ENCODE measurements at regions of chr4 and their contacts with region 1.

Region 1: GRCh38 chr4:122732329-122733026 is at the start of gene BBS12:
- DNase-seq: peak; percentile 96 to 99
- ATAC-seq: peak; percentile 96 to 100 (median 98)
- H3K4me3 ChIP-seq: peak within 1 kb of the TSS; percentile 61
- H3K4me3 Mint-ChIP-seq: peak within 1 kb of the TSS; percentile 97
- H3K27ac ChIP-seq: peak within 1 kb of the TSS; percentile 90
- H3K27ac Mint-ChIP-seq: peak within 1 kb of the TSS; percentile 95 to 97
- H3K4me1 ChIP-seq: peaks cover 12% of the 10 kb centered on the region
- H3K4me1 Mint-ChIP-seq: peaks cover 6 to 14% of the 10 kb centered on the region in 2 donors
- H3K27me3 ChIP-seq: no peaks in the 10 kb centered on the region
- H3K27me3 Mint-ChIP-seq: peaks cover 0 to 10% of the 10 kb centered on the region in 2 donors
- CTCF ChIP-seq: peak; percentile 23
- total RNA-seq, gene BBS12: 0.85 to 1.9 (median 1.8) TPM

Region 2: GRCh38 chr4:122577808-122578781 is 154.4 kb before region 1 on chr4:
- intact Hi-C with region 1: no loop called
- DNase-seq: peak in 1 of 2 donors; percentile 89
- ATAC-seq: peak; percentile 61 to 80 (median 64)
- H3K4me3 ChIP-seq: no peak overlapping the region
- H3K4me3 Mint-ChIP-seq: no peak overlapping the region
- H3K27ac ChIP-seq: no peak overlapping the region
- H3K27ac Mint-ChIP-seq: no peak overlapping the region
- H3K4me1 ChIP-seq: peaks cover 7% of the 10 kb centered on the region
- H3K4me1 Mint-ChIP-seq: peaks cover 4% of the 10 kb centered on the region in 2 donors
- H3K27me3 ChIP-seq: no peaks in the 10 kb centered on the region
- H3K27me3 Mint-ChIP-seq: peaks cover 0 to 17% of the 10 kb centered on the region in 2 donors
- CTCF ChIP-seq: peak; percentile 68

Region 3: DNA sequence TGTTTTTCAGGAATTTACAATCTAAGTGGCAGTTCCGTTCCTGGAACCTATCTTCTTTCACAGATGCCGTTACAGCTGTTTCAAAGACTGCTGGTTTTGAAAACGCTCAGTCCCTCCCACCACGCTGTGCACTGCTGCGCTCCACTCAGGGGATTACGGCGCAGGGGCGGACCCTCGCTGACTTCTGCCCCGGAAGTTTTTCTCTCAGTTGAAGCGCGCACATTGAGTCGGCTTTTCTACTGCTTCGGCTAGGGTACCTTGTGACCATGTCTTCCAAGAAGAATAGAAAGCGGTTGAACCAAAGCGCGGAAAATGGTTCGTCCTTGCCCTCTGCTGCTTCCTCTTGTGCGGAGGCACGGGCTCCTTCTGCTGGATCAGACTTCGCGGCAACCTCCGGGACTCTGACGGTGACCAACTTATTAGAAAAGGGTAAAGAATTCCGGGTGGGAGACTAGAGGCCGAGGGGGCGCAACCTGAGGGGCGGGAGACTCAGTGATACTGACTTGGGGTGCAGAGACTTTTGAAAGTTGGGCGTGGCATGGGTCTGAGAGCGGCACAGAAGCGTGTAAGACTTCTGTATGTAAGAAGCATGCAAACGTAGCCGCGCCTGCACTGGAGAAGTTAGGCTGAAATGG is 190.5 kb after region 1 on chr4:
- intact Hi-C with region 1: loop called (anchors 1 kb)
- DNase-seq: peak; percentile 68 to 93
- ATAC-seq: peak; percentile 97 to 98 (median 97)
- H3K4me3 ChIP-seq: peak overlapping the region; percentile 84
- H3K4me3 Mint-ChIP-seq: peak overlapping the region; percentile 97
- H3K27ac ChIP-seq: peak overlapping the region; percentile 65
- H3K27ac Mint-ChIP-seq: peak overlapping the region; percentile 89 to 92
- H3K4me1 ChIP-seq: peaks cover 4% of the 10 kb centered on the region
- H3K4me1 Mint-ChIP-seq: no peaks in the 10 kb centered on the region
- H3K27me3 ChIP-seq: no peaks in the 10 kb centered on the region
- H3K27me3 Mint-ChIP-seq: no peaks in the 10 kb centered on the region
- CTCF ChIP-seq: no peak

Measured in natural killer cell (primary cell).